ENCODE measurements at regions of chr15 and their contacts with region 1.

Region 1: GRCh38 chr15:78638658-78639314 is 2.2 kb downstream of the CHRNB4 start:
- DNase-seq: peak in 2 of 3 donors; percentile 39 to 60
- ATAC-seq: peak; percentile 76 to 88 (median 80)
- H3K4me3 ChIP-seq: no peak overlapping the region
- H3K27ac ChIP-seq: no peak overlapping the region
- H3K4me1 ChIP-seq: peaks cover 0 to 4% (median 0%) of the 10 kb centered on the region in 4 donors
- H3K27me3 ChIP-seq: no peaks in the 10 kb centered on the region
- CTCF ChIP-seq: peak; percentile 58 to 73 (median 70)
- POLR2A ChIP-seq: no peak

Region 2: DNA sequence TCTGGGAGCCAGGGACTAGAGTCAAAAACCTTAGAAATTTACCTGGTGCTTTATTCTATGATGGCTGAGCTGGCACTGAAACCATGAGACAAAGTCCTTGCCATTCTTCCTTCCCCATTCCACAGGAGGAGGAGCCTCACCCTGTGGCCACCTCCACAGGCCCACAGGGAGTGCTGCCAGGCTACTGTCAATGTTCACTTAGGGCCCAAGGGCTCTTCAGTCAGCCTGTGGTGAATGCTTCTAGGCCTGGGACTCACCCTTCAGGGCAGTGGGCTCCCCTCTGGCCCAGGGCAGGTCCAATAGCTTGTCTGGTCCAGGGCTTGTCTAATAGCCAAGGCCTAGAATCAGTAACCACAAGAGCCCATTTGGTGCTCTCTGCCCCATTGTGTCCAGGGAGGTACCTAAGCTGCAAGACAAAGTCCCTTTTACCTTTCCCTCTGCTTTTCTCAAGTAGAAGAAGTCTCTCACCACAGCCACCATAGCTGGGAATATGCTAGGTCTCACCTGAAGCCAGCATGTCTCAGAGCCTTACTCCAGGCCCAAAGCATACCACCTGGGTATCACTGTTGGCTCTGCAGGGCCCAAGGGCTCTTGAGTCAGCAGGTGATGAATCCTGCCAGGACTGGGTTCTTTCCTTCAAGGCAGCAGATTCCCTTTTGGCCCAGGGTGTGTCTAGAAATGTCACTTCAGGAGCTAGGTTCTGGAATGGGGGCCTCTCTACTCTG is 64.0 kb after region 1 on chr15:
- intact Hi-C with region 1: loop called in 1 of 2 experiments (anchors 5 kb)
- DNase-seq: peak in 1 of 3 donors; percentile 31
- ATAC-seq: peak in 2 of 4 donors; percentile 35 to 77
- H3K4me3 ChIP-seq: no peak overlapping the region
- H3K27ac ChIP-seq: no peak overlapping the region
- H3K4me1 ChIP-seq: peaks cover 0 to 3% (median 0%) of the 10 kb centered on the region in 4 donors
- H3K27me3 ChIP-seq: no peaks in the 10 kb centered on the region
- CTCF ChIP-seq: no peak
- POLR2A ChIP-seq: no peak

Region 3: DNA sequence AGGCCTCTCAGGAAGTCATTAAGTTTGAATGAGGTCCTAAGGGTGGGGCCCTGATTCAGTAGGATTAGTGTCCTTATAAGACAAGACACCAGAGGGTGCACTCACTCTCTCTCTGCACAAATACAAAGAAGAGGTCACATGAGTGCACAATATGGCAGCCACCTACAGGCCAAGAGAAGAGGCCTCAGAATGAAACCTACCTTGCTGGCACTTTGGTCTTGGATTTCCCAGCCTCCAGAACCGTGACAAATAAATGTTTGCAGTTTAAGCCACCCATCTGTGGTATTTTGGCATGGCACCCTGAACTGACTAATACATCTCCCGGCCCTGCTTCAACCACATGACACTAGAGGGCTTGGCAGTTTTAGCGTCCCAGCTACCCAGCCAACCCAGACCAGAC is 76.1 kb after region 1 on chr15:
- intact Hi-C with region 1: loop called in 1 of 2 experiments (anchors 5 kb)
- DNase-seq: no peak
- ATAC-seq: no peak
- H3K4me3 ChIP-seq: no peak overlapping the region
- H3K27ac ChIP-seq: no peak overlapping the region
- H3K4me1 ChIP-seq: no peaks in the 10 kb centered on the region
- H3K27me3 ChIP-seq: no peaks in the 10 kb centered on the region
- CTCF ChIP-seq: peak in 1 of 4 donors; percentile 13
- POLR2A ChIP-seq: no peak